GM12878 (cell line): ENCODE measurements at regions of chr16 and their contacts with region 1.

Region 1: GRCh38 chr16:3264137-3265036 is 8.0 kb upstream of the MEFV start:
- DNase-seq: peak; percentile 84
- ATAC-seq: peak; percentile 96
- H3K4me3 ChIP-seq: peak overlapping the region; percentile 82
- H3K27ac ChIP-seq: peak overlapping the region; percentile 93
- H3K4me1 ChIP-seq: peaks cover 8% of the 10 kb centered on the region; the same call in 1 of the 2 replicates
- H3K27me3 ChIP-seq: no peaks in the 10 kb centered on the region
- CTCF ChIP-seq: peak; percentile 38 to 47 (median 44)
- EP300 ChIP-seq: 0 out of 4 replicates have a peak, but pooled peaks of 1 of the 2 experiments have one; percentile 18
- POLR2A ChIP-seq: peak; percentile 86
- RAD21 ChIP-seq: peak; percentile 45; the same call in 1 of the 2 replicates

Region 2: DNA sequence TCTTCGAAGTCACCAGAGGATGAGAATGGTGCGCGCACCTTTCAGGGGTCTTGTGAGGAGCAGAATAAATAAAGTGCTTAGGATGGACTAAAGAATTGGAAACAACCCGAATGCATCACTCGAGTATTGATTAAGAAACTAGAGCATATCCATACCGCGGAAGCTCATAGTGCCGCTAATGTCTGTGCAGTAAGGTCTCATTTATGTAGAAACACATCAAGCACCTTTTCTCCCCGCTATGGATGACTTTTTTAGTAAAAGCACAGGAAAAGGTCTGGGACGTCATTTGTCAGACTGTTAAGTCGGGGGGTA is 129.0 kb before region 1 on chr16:
- CTCF ChIA-PET with region 1: no interaction called
- POLR2A ChIA-PET with region 1: no interaction called
- RAD21 ChIA-PET with region 1: no interaction called
- SMC1A ChIA-PET with region 1: no interaction called
- in situ Hi-C with region 1: no loop called
- intact Hi-C with region 1: no loop called
- DNase-seq: no peak
- ATAC-seq: no peak; the same call in 2 of the 3 replicates
- H3K4me3 ChIP-seq: peak overlapping the region; percentile 99
- H3K27ac ChIP-seq: peak overlapping the region; percentile 66
- H3K4me1 ChIP-seq: peaks cover 5% of the 10 kb centered on the region; the same call in 1 of the 2 replicates
- H3K27me3 ChIP-seq: no peaks in the 10 kb centered on the region
- CTCF ChIP-seq: no peak
- EP300 ChIP-seq: no peak
- POLR2A ChIP-seq: no peak
- RAD21 ChIP-seq: no peak

Region 3: DNA sequence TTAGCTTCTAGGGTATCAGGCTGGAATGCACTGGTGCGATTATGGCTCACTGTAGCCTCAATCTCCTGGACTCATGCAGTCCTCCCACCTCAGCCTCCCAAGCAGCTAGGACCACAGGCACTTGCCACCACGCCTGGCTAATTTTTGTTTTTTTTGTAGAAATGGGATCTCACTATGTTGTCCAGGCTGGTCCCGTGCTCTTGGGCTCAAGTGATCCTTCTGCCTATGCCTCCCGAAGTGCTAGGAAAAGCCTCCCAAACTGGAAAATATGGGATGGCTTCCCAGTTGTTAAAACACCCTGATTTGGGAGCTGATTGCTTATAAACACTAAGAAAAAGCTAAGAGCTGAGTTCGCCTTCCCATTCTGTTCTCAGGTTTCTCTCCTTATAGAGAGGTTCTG is 12.3 kb after region 1 on chr16:
- CTCF ChIA-PET with region 1: interaction called, 20 read pairs
- POLR2A ChIA-PET with region 1: interaction called, 3 read pairs
- RAD21 ChIA-PET with region 1: interaction called, 4 read pairs
- SMC1A ChIA-PET with region 1: interaction called, 9 read pairs
- in situ Hi-C with region 1: no loop called
- intact Hi-C with region 1: no loop called
- DNase-seq: no peak
- ATAC-seq: no peak
- H3K4me3 ChIP-seq: no peak overlapping the region
- H3K27ac ChIP-seq: no peak overlapping the region
- H3K4me1 ChIP-seq: no peaks in the 10 kb centered on the region
- H3K27me3 ChIP-seq: no peaks in the 10 kb centered on the region
- CTCF ChIP-seq: no peak
- EP300 ChIP-seq: no peak
- POLR2A ChIP-seq: no peak
- RAD21 ChIP-seq: no peak

Region 4: GRCh38 chr16:3305109-3306068 is 41.0 kb after region 1 on chr16 and contains the starts of genes TIGD7 and ZNF75A:
- CTCF ChIA-PET with region 1: interaction called, 6 read pairs
- POLR2A ChIA-PET with region 1: interaction called, 9 read pairs
- RAD21 ChIA-PET with region 1: no interaction called
- SMC1A ChIA-PET with region 1: no interaction called
- in situ Hi-C with region 1: no loop called
- intact Hi-C with region 1: loop called (anchors 1 kb)
- DNase-seq: peak; percentile 45
- ATAC-seq: peak; percentile 99
- H3K4me3 ChIP-seq: peak within 1 kb of the TSS; percentile 79
- H3K27ac ChIP-seq: peak within 1 kb of the TSS; percentile 90
- H3K4me1 ChIP-seq: peaks cover 6% of the 10 kb centered on the region; the same call in 1 of the 2 replicates
- H3K27me3 ChIP-seq: no peaks in the 10 kb centered on the region
- CTCF ChIP-seq: peak in 2 of 3 experiments; percentile 2 to 10; a peak in 1 of 6 replicates
- EP300 ChIP-seq: no peak
- POLR2A ChIP-seq: peak; percentile 97
- RAD21 ChIP-seq: no peak
- polyA plus RNA-seq, gene TIGD7: 0.37 to 0.77 TPM
- polyA plus RNA-seq, gene ZNF75A: 7.4 to 8.7 TPM

Region 5: DNA sequence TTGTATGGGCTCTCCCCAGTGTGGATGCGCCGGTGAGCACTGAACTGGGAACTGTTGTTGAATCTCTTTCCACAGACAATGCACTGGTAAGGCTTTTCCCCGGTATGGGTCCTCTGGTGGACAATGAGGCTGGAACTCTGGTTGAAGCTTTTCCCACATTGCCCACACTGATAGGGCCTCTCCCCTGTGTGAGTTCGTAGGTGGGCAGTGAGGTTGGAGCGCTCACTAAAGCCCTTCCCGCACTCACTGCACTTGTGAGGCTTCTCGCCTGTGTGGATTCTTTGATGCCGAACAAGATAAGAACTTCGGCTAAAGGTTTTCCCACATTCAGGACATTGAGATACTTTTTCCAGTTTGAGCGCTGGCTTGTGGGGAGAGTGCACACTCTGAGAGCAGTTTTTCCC is 118.7 kb after region 1 on chr16:
- CTCF ChIA-PET with region 1: no interaction called
- POLR2A ChIA-PET with region 1: no interaction called
- RAD21 ChIA-PET with region 1: no interaction called
- SMC1A ChIA-PET with region 1: no interaction called
- in situ Hi-C with region 1: no loop called
- intact Hi-C with region 1: no loop called
- DNase-seq: no peak
- ATAC-seq: no peak
- H3K4me3 ChIP-seq: no peak overlapping the region
- H3K27ac ChIP-seq: no peak overlapping the region
- H3K4me1 ChIP-seq: no peaks in the 10 kb centered on the region
- H3K27me3 ChIP-seq: no peaks in the 10 kb centered on the region
- CTCF ChIP-seq: no peak
- EP300 ChIP-seq: no peak
- POLR2A ChIP-seq: no peak
- RAD21 ChIP-seq: no peak

Region 6: GRCh38 chr16:3457434-3458252 is 193.3 kb after region 1 on chr16:
- CTCF ChIA-PET with region 1: interaction called, 12 read pairs
- POLR2A ChIA-PET with region 1: no interaction called
- RAD21 ChIA-PET with region 1: no interaction called
- SMC1A ChIA-PET with region 1: interaction called, 4 read pairs
- in situ Hi-C with region 1: no loop called
- intact Hi-C with region 1: loop called (anchors 2 kb)
- DNase-seq: peak; percentile 49
- ATAC-seq: peak; percentile 93
- H3K4me3 ChIP-seq: peak overlapping the region; percentile 77
- H3K27ac ChIP-seq: peak overlapping the region; percentile 94
- H3K4me1 ChIP-seq: peaks cover 21% of the 10 kb centered on the region
- H3K27me3 ChIP-seq: no peaks in the 10 kb centered on the region
- CTCF ChIP-seq: peak; percentile 46 to 71 (median 61)
- EP300 ChIP-seq: no peak
- POLR2A ChIP-seq: peak; percentile 98
- RAD21 ChIP-seq: peak; percentile 37; the same call in 1 of the 2 replicates